ENCODE measurements at regions of chr12 and their contacts with region 1.

Region 1: DNA sequence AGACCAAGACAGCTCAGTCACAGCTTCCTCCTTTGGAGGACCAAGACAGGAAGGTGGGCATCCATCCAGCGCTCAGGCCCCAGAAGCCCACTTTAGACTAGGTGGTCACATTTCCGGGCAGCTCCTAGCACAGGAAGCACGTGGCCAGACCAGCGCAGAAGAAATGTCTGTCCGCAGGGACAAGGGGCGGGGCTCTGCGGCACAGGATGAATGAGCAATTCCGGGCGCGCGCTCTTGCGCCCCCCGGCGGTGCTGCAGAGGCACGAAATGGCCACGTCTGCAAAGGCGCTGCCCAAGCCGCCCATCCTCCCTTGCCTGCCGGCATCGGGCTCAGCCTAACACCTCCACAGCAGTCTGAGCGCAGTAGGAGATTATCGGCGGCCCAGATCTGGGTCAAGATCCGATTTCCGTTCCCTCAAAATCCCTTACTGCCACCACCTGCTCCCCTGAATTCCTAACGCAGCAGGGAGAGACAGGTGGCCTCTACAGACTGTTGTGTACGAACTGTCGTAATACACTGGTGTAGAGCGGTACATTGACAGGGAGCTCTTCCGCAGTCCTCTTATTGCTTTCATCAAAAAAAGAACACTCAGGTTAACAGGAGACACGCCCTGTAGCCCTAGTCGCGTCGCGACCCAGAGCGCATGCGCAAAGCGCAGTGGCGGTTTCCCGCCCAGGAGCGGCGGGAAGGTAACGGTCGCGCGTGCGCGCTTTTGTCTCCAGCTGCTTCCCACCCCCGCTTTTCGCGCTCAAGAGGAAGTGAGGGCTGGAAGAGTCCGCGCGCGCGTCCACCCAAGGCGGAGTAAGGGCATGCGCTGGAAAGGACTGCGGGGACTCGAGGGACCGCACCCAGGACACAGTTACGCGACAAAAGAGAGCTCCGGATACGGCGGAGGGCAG is 794 bp downstream of the TUBA1B start:
- DNase-seq: peak; percentile 97
- ATAC-seq: peak; percentile 51
- H3K4me3 ChIP-seq: peak overlapping the region; percentile 94 to 100 (median 100)
- H3K4me3 Mint-ChIP-seq: peak overlapping the region; percentile 97
- H3K27ac ChIP-seq: peak overlapping the region; percentile 93 to 98
- H3K27ac Mint-ChIP-seq: peak overlapping the region; percentile 99
- H3K4me1 ChIP-seq: peaks cover 28 to 36% of the 10 kb centered on the region in 2 donors
- H3K4me1 Mint-ChIP-seq: peaks cover 56% of the 10 kb centered on the region
- H3K27me3 ChIP-seq: no peaks in the 10 kb centered on the region
- H3K27me3 Mint-ChIP-seq: no peaks in the 10 kb centered on the region
- CTCF ChIP-seq: peak; percentile 88

Region 2: GRCh38 chr12:47949441-47950308 is 1180.7 kb before region 1 on chr12:
- CTCF ChIA-PET with region 1: no interaction called
- POLR2A ChIA-PET with region 1: no interaction called
- intact Hi-C with region 1: no loop called
- DNase-seq: peak; percentile 53
- ATAC-seq: peak; percentile 36
- H3K4me3 ChIP-seq: no peak overlapping the region
- H3K4me3 Mint-ChIP-seq: no peak overlapping the region
- H3K27ac ChIP-seq: no peak overlapping the region
- H3K27ac Mint-ChIP-seq: no peak overlapping the region
- H3K4me1 ChIP-seq: no peaks in the 10 kb centered on the region
- H3K4me1 Mint-ChIP-seq: no peaks in the 10 kb centered on the region
- H3K27me3 ChIP-seq: peaks cover 0 to 14% (median 0%) of the 10 kb centered on the region in 4 experiments
- H3K27me3 Mint-ChIP-seq: peaks cover 21% of the 10 kb centered on the region
- CTCF ChIP-seq: peak; percentile 73

Region 3: GRCh38 chr12:48977315-48978281 is 152.8 kb before region 1 on chr12:
- CTCF ChIA-PET with region 1: no interaction called
- POLR2A ChIA-PET with region 1: no interaction called
- intact Hi-C with region 1: loop called (anchors 1 kb)
- DNase-seq: peak; percentile 90
- ATAC-seq: peak; percentile 69
- H3K4me3 ChIP-seq: peak overlapping the region in 3 of 5 experiments; percentile 60 to 86 (median 65)
- H3K4me3 Mint-ChIP-seq: peak overlapping the region; percentile 72
- H3K27ac ChIP-seq: no peak overlapping the region
- H3K27ac Mint-ChIP-seq: peak overlapping the region; percentile 73
- H3K4me1 ChIP-seq: peaks cover 55 to 56% of the 10 kb centered on the region in 2 donors
- H3K4me1 Mint-ChIP-seq: peaks cover 57% of the 10 kb centered on the region
- H3K27me3 ChIP-seq: peaks cover 2 to 90% (median 54%) of the 10 kb centered on the region in 4 experiments
- H3K27me3 Mint-ChIP-seq: peaks cover 74% of the 10 kb centered on the region
- CTCF ChIP-seq: peak; percentile 92

Region 4: DNA sequence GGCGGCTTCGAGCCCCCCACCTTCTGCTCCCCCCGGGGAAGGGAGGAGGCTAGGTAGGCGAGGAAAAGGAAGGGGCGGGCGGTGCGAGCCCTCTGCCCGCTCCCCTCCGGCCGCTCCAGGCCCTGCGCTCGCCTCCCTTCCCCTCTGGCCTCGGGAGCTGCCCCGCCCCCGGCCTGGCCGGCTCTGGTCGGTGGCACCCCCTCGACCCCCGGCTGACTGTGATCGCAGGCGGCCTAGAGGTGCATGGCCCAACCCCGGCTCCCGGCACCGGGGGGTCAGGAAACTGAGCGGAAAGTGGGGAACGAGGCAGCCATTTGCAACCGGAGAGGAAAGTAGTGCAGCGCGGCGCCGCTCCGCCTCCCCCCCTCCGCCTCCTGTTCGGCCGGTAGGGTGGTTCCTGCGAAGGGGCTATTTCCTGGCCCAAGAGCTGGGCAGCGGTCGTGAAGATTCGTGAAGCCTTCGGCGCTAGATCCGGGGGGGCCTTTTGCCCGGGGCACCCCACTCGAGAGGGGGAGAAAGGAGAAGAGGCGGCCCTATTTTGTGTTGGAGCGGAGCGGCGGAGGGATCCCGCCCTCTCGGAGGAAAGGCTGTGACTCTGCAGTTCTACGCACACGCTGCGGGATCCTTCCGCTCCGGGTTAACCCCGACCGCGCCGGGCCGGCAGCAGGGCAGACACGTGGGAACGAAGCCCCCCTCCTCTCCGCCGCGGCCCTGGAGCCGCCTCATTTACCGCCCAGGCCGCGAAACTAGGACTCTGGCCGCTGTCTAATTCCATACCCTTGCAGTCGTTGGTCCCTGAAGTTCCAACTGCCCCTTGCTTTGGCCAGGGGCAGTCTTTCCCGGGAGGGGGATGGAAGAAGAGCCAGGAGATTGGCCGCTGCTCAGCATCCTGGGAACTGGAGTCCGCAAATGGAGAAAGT is 69.9 kb before region 1 on chr12 and contains the start of gene KMT2D:
- CTCF ChIA-PET with region 1: interaction called, 13 read pairs
- POLR2A ChIA-PET with region 1: interaction called, 4 read pairs
- intact Hi-C with region 1: loop called (anchors 2 kb)
- DNase-seq: peak; percentile 97
- ATAC-seq: peak; percentile 72
- H3K4me3 ChIP-seq: peak within 1 kb of the TSS; percentile 81 to 97 (median 91)
- H3K4me3 Mint-ChIP-seq: peak within 1 kb of the TSS; percentile 97
- H3K27ac ChIP-seq: peak within 1 kb of the TSS; percentile 77 to 88
- H3K27ac Mint-ChIP-seq: peak within 1 kb of the TSS; percentile 99
- H3K4me1 ChIP-seq: peaks cover 46 to 50% of the 10 kb centered on the region in 2 donors
- H3K4me1 Mint-ChIP-seq: peaks cover 50% of the 10 kb centered on the region
- H3K27me3 ChIP-seq: no peaks in the 10 kb centered on the region
- H3K27me3 Mint-ChIP-seq: no peaks in the 10 kb centered on the region
- CTCF ChIP-seq: no peak
- total RNA-seq, gene KMT2D: 179 and 199 TPM in 2 replicates

Region 5: DNA sequence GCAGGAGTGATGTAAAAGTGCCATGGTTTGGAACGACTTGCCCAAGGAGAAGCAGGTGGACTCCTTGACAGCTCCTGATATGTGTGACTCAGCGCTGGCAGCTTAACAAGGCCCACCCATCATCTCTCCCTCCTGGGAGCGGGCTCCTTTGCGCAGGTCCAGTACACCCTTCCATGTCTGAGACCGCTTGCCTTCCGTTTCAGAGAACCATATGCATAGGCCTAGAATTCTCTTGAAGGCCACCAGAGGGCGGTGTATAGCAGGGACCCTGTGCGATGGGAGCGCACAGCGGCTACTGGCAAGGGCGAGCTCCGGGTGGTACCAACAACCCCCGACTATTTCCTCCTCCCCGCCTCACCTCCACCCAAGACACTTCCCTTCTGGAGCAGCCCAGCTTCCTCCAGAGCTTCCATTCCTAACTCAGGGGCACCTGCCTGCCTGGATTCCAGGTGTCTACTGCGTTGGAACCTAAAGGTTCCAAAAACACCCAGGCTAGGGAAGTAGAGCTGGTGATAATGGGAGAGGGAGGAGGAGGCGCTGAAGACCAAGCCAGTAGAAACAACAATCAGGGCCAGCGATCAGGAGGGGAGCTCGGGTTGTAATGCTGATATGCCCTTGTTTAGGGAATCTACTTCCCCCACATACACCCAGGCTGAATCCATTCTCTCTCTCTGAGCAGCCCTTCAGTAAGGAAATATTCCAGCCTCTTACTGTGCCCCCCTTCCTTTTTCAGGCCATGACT is 42.0 kb before region 1 on chr12:
- CTCF ChIA-PET with region 1: interaction called, 60 read pairs
- POLR2A ChIA-PET with region 1: interaction called, 9 read pairs
- intact Hi-C with region 1: loop called (anchors 1 kb)
- DNase-seq: peak; percentile 88
- ATAC-seq: peak; percentile 92
- H3K4me3 ChIP-seq: peak overlapping the region in 1 of 5 experiments; percentile 10
- H3K4me3 Mint-ChIP-seq: peak overlapping the region; percentile 70
- H3K27ac ChIP-seq: no peak overlapping the region
- H3K27ac Mint-ChIP-seq: no peak overlapping the region
- H3K4me1 ChIP-seq: peaks cover 47 to 48% of the 10 kb centered on the region in 2 donors
- H3K4me1 Mint-ChIP-seq: peaks cover 38% of the 10 kb centered on the region
- H3K27me3 ChIP-seq: peaks cover 0 to 57% (median 37%) of the 10 kb centered on the region in 4 experiments
- H3K27me3 Mint-ChIP-seq: peaks cover 46% of the 10 kb centered on the region
- CTCF ChIP-seq: peak; percentile 96

Region 6: GRCh38 chr12:49110464-49111155 is 19.8 kb before region 1 on chr12 and contains the start of gene LMBR1L:
- CTCF ChIA-PET with region 1: interaction called, 23 read pairs
- POLR2A ChIA-PET with region 1: interaction called, 47 read pairs
- intact Hi-C with region 1: loop called (anchors 1 kb)
- DNase-seq: peak; percentile 99
- ATAC-seq: peak; percentile 93
- H3K4me3 ChIP-seq: peak within 1 kb of the TSS; percentile 61 to 99 (median 86)
- H3K4me3 Mint-ChIP-seq: peak within 1 kb of the TSS; percentile 96
- H3K27ac ChIP-seq: peak within 1 kb of the TSS; percentile 88 to 90
- H3K27ac Mint-ChIP-seq: peak within 1 kb of the TSS; percentile 96
- H3K4me1 ChIP-seq: peaks cover 16 to 23% of the 10 kb centered on the region in 2 donors
- H3K4me1 Mint-ChIP-seq: peaks cover 44% of the 10 kb centered on the region
- H3K27me3 ChIP-seq: no peaks in the 10 kb centered on the region
- H3K27me3 Mint-ChIP-seq: no peaks in the 10 kb centered on the region
- CTCF ChIP-seq: peak; percentile 66
- total RNA-seq, gene LMBR1L: 182 and 187 TPM in 2 replicates

Region 7: GRCh38 chr12:49188914-49189367 is 58.5 kb after region 1 on chr12 and contains the start of gene TUBA1A:
- CTCF ChIA-PET with region 1: interaction called, 60 read pairs
- POLR2A ChIA-PET with region 1: interaction called, 110 read pairs
- intact Hi-C with region 1: loop called (anchors 1 kb)
- DNase-seq: peak; percentile 99
- ATAC-seq: peak; percentile 85
- H3K4me3 ChIP-seq: peak within 1 kb of the TSS; percentile 79 to 98 (median 90)
- H3K4me3 Mint-ChIP-seq: peak within 1 kb of the TSS; percentile 94
- H3K27ac ChIP-seq: peak within 1 kb of the TSS; percentile 94 to 99
- H3K27ac Mint-ChIP-seq: peak within 1 kb of the TSS; percentile 99
- H3K4me1 ChIP-seq: peaks cover 12 to 14% of the 10 kb centered on the region in 2 donors
- H3K4me1 Mint-ChIP-seq: peaks cover 18% of the 10 kb centered on the region
- H3K27me3 ChIP-seq: no peaks in the 10 kb centered on the region
- H3K27me3 Mint-ChIP-seq: no peaks in the 10 kb centered on the region
- CTCF ChIP-seq: no peak
- total RNA-seq, gene TUBA1A: 137 and 142 TPM in 2 replicates

Region 8: DNA sequence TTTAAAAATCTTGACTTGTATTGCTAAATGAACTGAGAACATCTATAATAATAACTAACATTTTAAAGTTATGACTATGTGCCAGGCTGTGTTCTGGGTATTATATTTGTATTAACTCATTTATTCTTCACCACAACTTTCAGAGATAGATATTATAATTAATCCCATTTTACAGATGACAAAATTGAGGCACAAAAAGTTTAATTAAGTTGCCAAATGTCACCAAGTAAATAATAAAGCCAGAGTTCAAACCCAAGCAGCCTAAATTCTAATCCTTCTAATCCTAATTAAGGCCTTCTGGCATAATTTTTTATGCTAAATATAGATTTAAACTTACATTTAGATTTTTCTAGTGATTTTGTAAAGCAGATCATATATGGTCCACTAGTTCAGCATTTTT is 76.0 kb after region 1 on chr12:
- CTCF ChIA-PET with region 1: no interaction called
- POLR2A ChIA-PET with region 1: no interaction called
- intact Hi-C with region 1: no loop called
- DNase-seq: no peak
- ATAC-seq: no peak
- H3K4me3 ChIP-seq: no peak overlapping the region
- H3K4me3 Mint-ChIP-seq: no peak overlapping the region
- H3K27ac ChIP-seq: no peak overlapping the region
- H3K27ac Mint-ChIP-seq: no peak overlapping the region
- H3K4me1 ChIP-seq: peaks cover 3 to 7% of the 10 kb centered on the region in 2 donors
- H3K4me1 Mint-ChIP-seq: peaks cover 7% of the 10 kb centered on the region
- H3K27me3 ChIP-seq: no peaks in the 10 kb centered on the region
- H3K27me3 Mint-ChIP-seq: no peaks in the 10 kb centered on the region
- CTCF ChIP-seq: no peak

Region 9: GRCh38 chr12:49264738-49265515 is 134.5 kb after region 1 on chr12 and contains the start of gene TUBA1C:
- CTCF ChIA-PET with region 1: no interaction called
- POLR2A ChIA-PET with region 1: no interaction called
- intact Hi-C with region 1: loop called (anchors 1 kb)
- DNase-seq: peak; percentile 92
- ATAC-seq: peak; percentile 93
- H3K4me3 ChIP-seq: peak within 1 kb of the TSS; percentile 42 to 98 (median 83)
- H3K4me3 Mint-ChIP-seq: peak within 1 kb of the TSS; percentile 97
- H3K27ac ChIP-seq: peak within 1 kb of the TSS; percentile 80 to 82
- H3K27ac Mint-ChIP-seq: peak within 1 kb of the TSS; percentile 94
- H3K4me1 ChIP-seq: peaks cover 4 to 12% of the 10 kb centered on the region in 2 donors
- H3K4me1 Mint-ChIP-seq: peaks cover 20% of the 10 kb centered on the region
- H3K27me3 ChIP-seq: no peaks in the 10 kb centered on the region
- H3K27me3 Mint-ChIP-seq: no peaks in the 10 kb centered on the region
- CTCF ChIP-seq: no peak
- total RNA-seq, gene TUBA1C: 34.9 and 35.2 TPM in 2 replicates

Measured in B cell (primary cell).